PC-9 (cell line): ENCODE measurements at regions of chr2 and their contacts with region 1.

Region 1: DNA sequence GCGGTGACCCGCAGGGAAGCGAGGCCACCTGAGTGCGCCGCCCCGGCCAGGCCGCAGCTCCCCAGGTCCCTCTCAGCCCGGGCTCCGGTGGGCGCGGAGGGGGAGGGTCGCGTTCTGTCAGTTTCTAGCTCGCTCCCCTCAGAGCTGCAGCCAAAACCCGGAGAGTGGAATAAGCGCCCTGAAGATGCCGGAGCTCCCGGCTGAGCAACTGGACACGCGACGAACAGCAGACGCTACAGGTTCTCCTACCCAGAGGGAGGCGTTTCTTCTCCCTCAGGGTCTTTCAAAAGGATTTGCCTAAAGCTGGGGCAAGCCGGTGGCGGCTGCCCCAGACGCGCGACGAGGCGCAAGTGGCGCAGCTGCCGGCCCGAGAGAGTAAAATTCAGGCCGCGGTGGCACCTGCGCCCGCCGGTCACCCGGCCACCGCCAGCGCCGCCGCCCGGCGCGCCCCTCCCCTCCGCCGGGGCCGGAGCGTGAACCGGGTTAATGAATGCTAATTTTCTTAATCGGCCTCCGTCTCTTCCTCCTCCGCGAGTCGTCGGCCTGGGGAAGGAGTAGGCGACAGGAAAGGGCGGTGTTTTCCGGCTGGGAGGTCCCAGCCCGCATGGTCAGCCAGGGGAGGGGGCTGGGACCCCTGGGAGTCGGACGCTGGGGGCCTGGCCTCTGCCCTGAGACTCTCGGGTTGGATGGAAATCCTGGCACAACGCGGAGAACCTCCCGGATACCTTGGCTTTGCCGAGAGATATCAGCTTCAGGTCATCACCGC is 845 bp upstream of the CDC42EP3 start:
- DNase-seq: peak; percentile 82 to 84
- H3K4me3 ChIP-seq: peak overlapping the region; percentile 79
- H3K27ac ChIP-seq: peak overlapping the region; percentile 90
- H3K4me1 ChIP-seq: peaks cover 43% of the 10 kb centered on the region
- H3K27me3 ChIP-seq: no peaks in the 10 kb centered on the region
- CTCF ChIP-seq: no peak

Region 2: GRCh38 chr2:37414470-37414949 is 257.8 kb before region 1 on chr2:
- CTCF ChIA-PET with region 1: interaction called, 5 read pairs
- POLR2A ChIA-PET with region 1: no interaction called
- intact Hi-C with region 1: loop called (anchors 1 kb)
- DNase-seq: peak; percentile 5 to 65
- H3K4me3 ChIP-seq: no peak overlapping the region
- H3K27ac ChIP-seq: no peak overlapping the region
- H3K4me1 ChIP-seq: no peaks in the 10 kb centered on the region
- H3K27me3 ChIP-seq: no peaks in the 10 kb centered on the region
- CTCF ChIP-seq: peak; percentile 94

Region 3: GRCh38 chr2:37653805-37654378 is 18.4 kb before region 1 on chr2:
- CTCF ChIA-PET with region 1: interaction called, 3 read pairs
- POLR2A ChIA-PET with region 1: interaction called, 3 read pairs
- intact Hi-C with region 1: loop called (anchors 2 kb)
- DNase-seq: no peak
- H3K4me3 ChIP-seq: no peak overlapping the region
- H3K27ac ChIP-seq: peak overlapping the region; percentile 60; the same call in 1 of the 2 replicates
- H3K4me1 ChIP-seq: peaks cover 44% of the 10 kb centered on the region
- H3K27me3 ChIP-seq: no peaks in the 10 kb centered on the region
- CTCF ChIP-seq: no peak

Region 4: GRCh38 chr2:37711308-37711731 is 39.0 kb after region 1 on chr2:
- CTCF ChIA-PET with region 1: no interaction called
- POLR2A ChIA-PET with region 1: interaction called, 4 read pairs
- intact Hi-C with region 1: loop called (anchors 2 kb)
- DNase-seq: peak; percentile 80 to 95
- H3K4me3 ChIP-seq: no peak overlapping the region
- H3K27ac ChIP-seq: peak overlapping the region; percentile 66
- H3K4me1 ChIP-seq: peaks cover 42% of the 10 kb centered on the region
- H3K27me3 ChIP-seq: no peaks in the 10 kb centered on the region
- CTCF ChIP-seq: no peak

Region 5: DNA sequence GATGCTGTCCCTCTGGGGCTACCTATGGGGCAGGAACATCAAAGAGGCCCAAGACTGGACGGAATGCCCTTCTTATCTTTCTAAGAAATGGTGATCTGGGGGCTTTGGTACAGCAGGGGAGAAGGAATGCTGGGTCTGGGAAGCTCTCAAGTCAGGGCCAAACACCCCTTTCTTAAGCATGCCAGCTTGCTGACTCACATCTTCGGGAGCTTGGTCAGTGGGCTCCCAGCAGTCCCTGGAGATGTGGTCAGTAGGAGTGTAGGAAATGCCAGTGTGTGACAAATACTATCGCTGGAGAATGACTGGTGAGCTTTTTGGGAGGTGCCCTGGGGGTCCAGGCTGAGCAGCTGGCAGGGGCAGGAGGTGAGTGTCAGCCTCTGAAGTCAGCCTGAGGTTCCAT is 104.2 kb after region 1 on chr2:
- CTCF ChIA-PET with region 1: no interaction called
- POLR2A ChIA-PET with region 1: interaction called, 3 read pairs
- intact Hi-C with region 1: loop called (anchors 2 kb)
- DNase-seq: peak; percentile 76 to 93
- H3K4me3 ChIP-seq: no peak overlapping the region
- H3K27ac ChIP-seq: peak overlapping the region; percentile 62
- H3K4me1 ChIP-seq: peaks cover 56% of the 10 kb centered on the region
- H3K27me3 ChIP-seq: no peaks in the 10 kb centered on the region
- CTCF ChIP-seq: no peak

Region 6: GRCh38 chr2:37802899-37803379 is 130.7 kb after region 1 on chr2:
- CTCF ChIA-PET with region 1: no interaction called
- POLR2A ChIA-PET with region 1: no interaction called
- intact Hi-C with region 1: loop called (anchors 2 kb)
- DNase-seq: peak in 1 of 2 experiments; percentile 94
- H3K4me3 ChIP-seq: peak overlapping the region; percentile 28; the same call in 1 of the 2 replicates
- H3K27ac ChIP-seq: peak overlapping the region; percentile 88
- H3K4me1 ChIP-seq: peaks cover 45% of the 10 kb centered on the region
- H3K27me3 ChIP-seq: no peaks in the 10 kb centered on the region
- CTCF ChIP-seq: no peak

Region 7: DNA sequence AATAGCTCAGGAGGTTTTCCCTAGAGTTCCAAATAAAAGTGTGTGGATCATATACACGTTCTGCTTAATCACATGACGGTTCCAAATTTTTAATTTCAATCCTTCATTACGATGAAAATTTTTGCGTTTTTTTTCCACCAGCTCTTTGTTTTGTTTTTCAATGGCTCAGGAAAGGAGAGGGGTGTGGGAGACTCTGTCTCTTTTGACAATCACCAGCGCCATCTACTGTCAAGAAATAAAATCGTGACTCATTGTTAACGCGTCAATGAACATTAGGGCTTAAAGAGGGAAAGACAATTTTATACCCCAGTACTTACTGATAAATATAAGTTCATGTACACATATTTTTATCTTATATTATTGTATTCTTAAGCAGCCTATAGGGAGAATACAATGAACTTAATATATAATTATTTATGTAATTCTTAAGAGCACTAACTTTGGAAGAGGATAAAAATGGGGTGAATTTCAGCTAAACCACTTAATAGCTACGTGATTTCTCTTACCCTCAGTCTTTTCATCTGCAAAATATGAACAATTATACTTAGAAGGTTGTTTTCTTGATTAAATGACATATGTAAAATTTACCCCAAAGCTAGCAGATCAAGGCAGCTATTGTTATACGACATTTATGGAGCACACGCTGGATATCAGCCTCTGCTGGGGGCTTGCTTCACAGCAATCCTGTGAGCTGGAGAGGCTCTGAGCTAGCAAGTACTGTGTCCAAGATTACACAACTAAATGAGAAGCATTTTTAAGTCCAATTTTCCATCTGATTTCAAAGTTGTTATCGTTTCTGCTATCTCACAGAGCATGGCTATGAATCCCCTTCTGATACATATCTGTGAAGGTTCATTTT is 205.4 kb after region 1 on chr2:
- CTCF ChIA-PET with region 1: interaction called, 3 read pairs
- POLR2A ChIA-PET with region 1: no interaction called
- intact Hi-C with region 1: loop called (anchors 5 kb)
- DNase-seq: peak; percentile 31 to 38
- H3K4me3 ChIP-seq: no peak overlapping the region
- H3K27ac ChIP-seq: no peak overlapping the region
- H3K4me1 ChIP-seq: no peaks in the 10 kb centered on the region
- H3K27me3 ChIP-seq: no peaks in the 10 kb centered on the region
- CTCF ChIP-seq: peak; percentile 93

Region 8: GRCh38 chr2:37916512-37917082 is 244.3 kb after region 1 on chr2:
- CTCF ChIA-PET with region 1: no interaction called
- POLR2A ChIA-PET with region 1: no interaction called
- intact Hi-C with region 1: no loop called
- DNase-seq: peak in 1 of 2 experiments; percentile 82
- H3K4me3 ChIP-seq: no peak overlapping the region
- H3K27ac ChIP-seq: no peak overlapping the region
- H3K4me1 ChIP-seq: 0 out of 2 replicates have a peak, but pooled peaks cover 8% of the 10 kb centered on the region
- H3K27me3 ChIP-seq: no peaks in the 10 kb centered on the region
- CTCF ChIP-seq: no peak